Cardiac septum (tissue), 1 donor: ENCODE measurements at regions of chr6 and their contacts with region 1.

Region 1: GRCh38 chr6:134097114-134097707 is 44.8 kb upstream of the SLC2A12 start:
- DNase-seq: no peak

Region 2: DNA sequence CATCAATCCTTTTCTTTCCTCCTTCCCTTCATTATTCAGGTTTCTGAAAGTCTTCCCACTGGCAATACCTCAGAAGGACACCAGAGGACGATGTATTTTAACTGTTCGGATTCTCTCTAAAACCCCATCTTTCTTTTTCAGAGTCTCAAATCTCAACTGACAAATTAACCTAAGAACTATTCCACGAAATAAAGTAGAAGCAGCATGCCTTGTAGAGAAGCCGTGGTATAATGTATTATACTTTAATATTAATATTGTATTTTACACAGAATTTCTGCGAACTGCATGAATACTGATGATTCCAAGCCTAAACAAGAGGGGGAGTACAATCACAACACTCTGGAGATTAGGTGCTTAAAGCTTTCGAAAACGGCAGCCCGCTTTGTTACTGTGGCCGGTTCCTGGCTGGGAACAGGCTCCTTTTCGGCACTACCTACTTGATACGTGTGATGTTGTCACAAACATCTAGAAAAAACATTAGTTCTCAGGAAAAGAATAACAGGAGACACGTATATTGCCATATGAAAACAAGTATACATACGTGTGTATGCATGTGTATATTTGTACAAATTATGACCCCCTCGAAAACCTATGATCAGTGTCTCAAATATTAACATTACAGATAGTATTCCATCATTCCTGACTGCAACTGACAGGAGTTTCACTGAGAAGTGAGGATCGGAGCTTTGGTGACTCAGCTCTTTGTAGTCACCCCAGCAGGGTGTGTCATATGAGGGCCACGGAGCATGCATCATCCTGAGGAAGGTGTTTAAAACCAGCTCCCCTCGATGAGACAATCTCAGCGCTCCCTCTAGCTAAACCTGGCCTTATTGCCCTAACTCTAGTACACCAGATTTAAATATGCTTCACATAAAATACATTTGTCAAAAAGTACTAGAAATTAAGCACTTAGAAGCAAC is 528.0 kb before region 1 on chr6:
- intact Hi-C with region 1: loop called (anchors 10 kb)
- DNase-seq: no peak

Region 3: DNA sequence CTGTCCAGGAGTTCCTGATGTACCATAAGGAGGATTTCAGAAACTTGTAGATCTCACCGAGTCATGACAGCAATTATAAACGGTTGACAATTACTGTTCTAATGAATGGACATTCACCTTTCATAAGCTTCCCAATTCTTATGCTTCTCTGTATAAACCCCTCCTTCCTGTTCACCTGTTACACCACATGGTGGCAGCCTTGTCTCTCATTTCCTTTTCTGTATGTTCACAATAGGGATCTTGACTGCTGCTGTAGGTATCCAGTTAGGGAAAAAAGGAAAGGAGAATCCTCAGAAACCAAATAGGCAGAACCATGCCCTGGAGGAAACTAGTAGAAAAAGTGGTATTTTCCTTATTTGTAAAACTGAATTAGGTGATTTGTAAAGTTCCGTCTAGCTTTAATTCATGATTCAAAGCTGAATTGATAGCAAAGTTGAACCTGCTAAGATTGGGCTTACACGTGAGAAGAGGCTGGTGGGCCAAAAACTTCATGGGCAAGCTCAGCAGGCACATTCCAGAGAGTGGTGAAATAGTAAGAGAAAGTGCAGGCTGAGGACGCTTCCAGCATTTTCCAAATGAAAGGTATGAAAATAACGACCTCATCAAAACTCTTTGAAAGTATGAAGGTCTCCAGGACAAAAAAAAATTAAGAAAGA is 173.1 kb before region 1 on chr6:
- intact Hi-C with region 1: loop called (anchors 1 kb)
- DNase-seq: no peak

Region 4: DNA sequence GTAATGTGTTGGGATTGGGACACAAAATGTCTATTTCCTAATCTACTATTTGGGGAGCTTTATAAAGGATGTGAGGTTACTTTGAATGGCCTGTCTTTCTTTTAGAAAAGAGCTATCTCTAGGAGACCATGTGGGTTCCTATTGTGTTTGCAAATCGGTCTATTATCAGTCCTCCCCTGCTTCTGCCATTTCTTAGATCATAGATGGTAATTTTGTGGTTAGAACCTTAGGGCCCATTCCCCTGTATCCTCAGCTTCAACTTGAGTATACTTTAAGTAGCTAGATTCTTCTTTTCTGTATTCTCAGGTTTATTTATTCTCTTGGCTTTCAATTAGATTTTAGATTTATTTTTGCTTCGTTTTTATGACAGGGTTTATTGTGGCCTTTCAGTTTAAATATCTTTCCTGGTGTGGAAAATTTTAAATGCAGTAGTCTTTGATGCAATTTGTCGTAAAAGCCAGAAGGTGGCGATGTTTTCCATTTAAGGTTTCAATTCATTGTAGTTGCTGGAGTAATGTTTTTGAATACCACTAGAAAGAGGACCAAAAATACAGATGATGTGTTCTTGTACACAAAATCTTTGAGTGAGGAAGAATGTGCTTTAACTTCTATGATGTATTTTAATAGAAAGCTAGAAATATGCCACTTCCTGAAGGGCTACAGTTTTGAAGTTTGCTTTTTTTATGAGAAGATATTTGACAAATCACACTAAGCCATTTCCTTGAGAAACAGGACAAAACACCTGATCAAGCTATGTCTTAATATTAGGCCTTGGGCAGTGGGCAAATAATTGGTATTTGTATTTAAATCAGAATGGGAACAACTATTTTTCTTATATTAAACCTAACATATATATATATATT is 123.9 kb before region 1 on chr6:
- intact Hi-C with region 1: no loop called
- DNase-seq: no peak

Region 5: GRCh38 chr6:134007077-134007476 is 90.1 kb before region 1 on chr6:
- intact Hi-C with region 1: no loop called
- DNase-seq: no peak